ENCODE measurements at regions of chr20 and their contacts with region 1.

Region 1: DNA sequence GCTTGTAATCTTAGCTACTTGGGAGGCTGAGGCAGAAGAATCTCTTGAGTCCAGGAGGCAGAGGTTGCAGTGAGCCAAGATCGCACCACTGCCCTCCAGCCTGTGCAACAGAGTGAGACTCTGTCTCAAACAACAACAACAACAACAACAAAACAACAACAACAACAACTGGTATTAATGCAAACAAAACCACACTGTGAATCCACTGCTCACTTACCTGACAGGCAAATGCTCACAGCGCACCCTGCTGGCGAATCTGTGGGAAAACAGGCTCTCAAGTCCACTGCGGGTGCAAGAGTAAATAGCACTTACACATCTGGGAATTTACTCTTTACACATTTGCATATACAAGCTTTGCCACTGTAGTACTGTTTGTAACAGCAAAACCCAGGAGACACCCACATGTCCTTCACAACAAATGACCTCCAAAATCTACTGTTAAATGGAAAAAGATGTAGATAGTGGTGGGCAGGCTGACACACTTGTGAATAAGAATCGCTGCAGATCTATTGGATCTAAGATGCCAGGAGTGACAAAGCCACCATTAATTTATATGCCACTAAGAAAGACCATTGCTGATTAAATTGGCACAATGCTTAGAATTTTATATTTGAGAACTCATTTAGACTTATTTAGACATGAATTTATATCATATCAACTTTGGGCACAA is 29.3 kb downstream of the NSFL1C start:
- DNase-seq: peak; percentile 57
- H3K4me3 ChIP-seq: no peak overlapping the region
- H3K27ac ChIP-seq: no peak overlapping the region
- H3K4me1 ChIP-seq: peaks cover 13% of the 10 kb centered on the region
- H3K27me3 ChIP-seq: no peaks in the 10 kb centered on the region
- CTCF ChIP-seq: peak; percentile 85 to 93

Region 2: DNA sequence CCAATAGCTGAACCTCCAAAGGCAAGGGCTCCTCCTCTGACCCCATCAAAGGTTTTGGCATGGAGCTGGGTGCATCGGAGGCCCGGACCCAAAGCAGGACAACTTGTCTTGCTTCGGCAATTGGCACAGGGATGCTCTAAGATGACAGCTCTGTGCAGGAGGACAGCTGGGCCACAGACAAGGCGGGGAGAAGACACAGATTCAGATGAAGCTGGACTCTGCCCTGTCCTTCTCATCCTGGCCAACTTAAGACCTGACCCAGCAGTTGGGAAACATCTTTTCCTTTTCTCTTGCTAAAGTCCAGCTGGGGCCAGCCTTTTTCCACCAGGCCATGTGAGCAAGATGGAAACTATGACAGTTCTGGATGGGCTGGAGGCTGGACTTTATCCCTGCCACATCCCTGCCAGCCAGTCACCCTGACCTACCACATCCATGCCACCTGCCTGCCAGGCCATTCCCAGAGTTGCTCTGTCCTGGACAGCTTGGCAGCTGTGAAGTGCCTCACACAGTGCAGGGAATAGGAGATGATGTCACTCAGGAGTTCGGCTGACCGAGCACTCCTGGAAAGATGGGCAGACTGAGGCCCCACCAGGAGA is 331.7 kb before region 1 on chr20:
- CTCF ChIA-PET with region 1: no interaction called
- dilution Hi-C with region 1: no loop called
- in situ Hi-C with region 1: no loop called
- intact Hi-C with region 1: no loop called
- DNase-seq: no peak
- H3K4me3 ChIP-seq: no peak overlapping the region
- H3K27ac ChIP-seq: no peak overlapping the region
- H3K4me1 ChIP-seq: no peaks in the 10 kb centered on the region
- H3K27me3 ChIP-seq: no peaks in the 10 kb centered on the region
- CTCF ChIP-seq: no peak

Region 3: DNA sequence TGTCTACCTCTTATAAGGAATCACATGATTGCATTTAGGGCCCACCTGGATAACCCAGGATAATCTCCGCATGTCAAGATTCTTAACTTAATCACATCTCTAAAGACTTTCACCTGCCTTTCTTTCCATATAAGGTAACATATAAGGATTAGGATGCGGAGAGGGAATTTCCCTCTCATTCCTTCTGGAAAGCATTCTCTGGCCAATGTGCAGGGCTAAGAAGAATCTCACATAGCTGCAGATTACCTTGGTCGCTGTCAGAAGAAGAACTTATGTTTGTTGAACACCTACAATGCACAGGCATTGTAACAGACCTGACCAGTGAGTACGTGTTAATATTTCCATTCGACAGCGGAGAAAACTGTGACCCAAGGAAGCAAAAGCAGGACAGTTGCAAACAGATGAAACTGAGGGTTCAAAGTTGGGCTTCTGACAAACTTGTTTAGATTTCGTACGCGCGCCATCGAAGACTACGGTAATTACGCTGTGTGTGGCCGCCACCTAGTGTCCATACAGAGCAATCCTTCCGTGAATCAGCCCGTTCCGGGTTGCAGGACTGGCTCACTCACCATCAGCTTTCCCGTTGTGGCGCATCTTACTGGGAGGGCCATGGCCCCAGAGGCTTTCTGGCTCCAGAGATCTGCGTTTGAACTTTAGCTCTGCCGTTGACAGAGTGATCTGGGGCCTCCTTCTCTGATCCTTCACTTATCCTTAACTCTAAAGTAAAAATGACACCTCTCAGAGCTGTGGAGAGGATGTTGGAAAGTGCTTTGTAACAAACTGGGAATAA is 224.6 kb before region 1 on chr20:
- CTCF ChIA-PET with region 1: no interaction called
- dilution Hi-C with region 1: no loop called
- in situ Hi-C with region 1: no loop called
- intact Hi-C with region 1: loop called (anchors 5 kb)
- DNase-seq: peak; percentile 65
- H3K4me3 ChIP-seq: no peak overlapping the region
- H3K27ac ChIP-seq: no peak overlapping the region
- H3K4me1 ChIP-seq: no peaks in the 10 kb centered on the region
- H3K27me3 ChIP-seq: peaks cover 1% of the 10 kb centered on the region
- CTCF ChIP-seq: peak; percentile 86

Region 4: GRCh38 chr20:1313236-1313964 is 124.0 kb before region 1 on chr20:
- CTCF ChIA-PET with region 1: no interaction called
- dilution Hi-C with region 1: loop called (anchors 5 kb)
- in situ Hi-C with region 1: loop called in 1 of 2 experiments (anchors 5 kb)
- intact Hi-C with region 1: loop called (anchors 1 kb)
- DNase-seq: peak; percentile 37
- H3K4me3 ChIP-seq: peak overlapping the region in 2 of 3 experiments; percentile 17 to 27
- H3K27ac ChIP-seq: no peak overlapping the region
- H3K4me1 ChIP-seq: peaks cover 2% of the 10 kb centered on the region
- H3K27me3 ChIP-seq: no peaks in the 10 kb centered on the region
- CTCF ChIP-seq: peak; percentile 83 to 95

Region 5: DNA sequence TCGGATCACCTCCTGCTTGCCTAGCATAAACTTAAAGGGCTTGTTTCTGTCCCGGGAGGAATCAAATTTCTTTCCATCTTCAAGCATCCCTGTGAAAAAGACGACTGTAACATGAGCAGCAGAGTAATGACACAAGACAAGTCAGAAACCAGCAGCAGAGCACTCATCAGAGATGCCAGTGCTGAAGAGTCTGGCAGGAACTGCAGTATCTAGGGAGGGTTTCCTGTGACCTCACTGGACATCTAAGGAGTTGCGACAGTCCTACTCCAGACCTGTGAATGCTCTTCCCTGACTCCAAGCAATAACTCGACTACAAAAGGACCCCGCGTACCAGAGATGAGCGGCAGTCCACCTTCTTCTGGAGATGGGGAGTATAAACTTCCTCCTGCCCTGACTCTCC is 61.9 kb before region 1 on chr20:
- CTCF ChIA-PET with region 1: no interaction called
- dilution Hi-C with region 1: no loop called
- in situ Hi-C with region 1: no loop called
- intact Hi-C with region 1: loop called (anchors 5 kb)
- DNase-seq: peak; percentile 37
- H3K4me3 ChIP-seq: no peak overlapping the region
- H3K27ac ChIP-seq: no peak overlapping the region
- H3K4me1 ChIP-seq: peaks cover 71% of the 10 kb centered on the region
- H3K27me3 ChIP-seq: no peaks in the 10 kb centered on the region
- CTCF ChIP-seq: no peak

Region 6: DNA sequence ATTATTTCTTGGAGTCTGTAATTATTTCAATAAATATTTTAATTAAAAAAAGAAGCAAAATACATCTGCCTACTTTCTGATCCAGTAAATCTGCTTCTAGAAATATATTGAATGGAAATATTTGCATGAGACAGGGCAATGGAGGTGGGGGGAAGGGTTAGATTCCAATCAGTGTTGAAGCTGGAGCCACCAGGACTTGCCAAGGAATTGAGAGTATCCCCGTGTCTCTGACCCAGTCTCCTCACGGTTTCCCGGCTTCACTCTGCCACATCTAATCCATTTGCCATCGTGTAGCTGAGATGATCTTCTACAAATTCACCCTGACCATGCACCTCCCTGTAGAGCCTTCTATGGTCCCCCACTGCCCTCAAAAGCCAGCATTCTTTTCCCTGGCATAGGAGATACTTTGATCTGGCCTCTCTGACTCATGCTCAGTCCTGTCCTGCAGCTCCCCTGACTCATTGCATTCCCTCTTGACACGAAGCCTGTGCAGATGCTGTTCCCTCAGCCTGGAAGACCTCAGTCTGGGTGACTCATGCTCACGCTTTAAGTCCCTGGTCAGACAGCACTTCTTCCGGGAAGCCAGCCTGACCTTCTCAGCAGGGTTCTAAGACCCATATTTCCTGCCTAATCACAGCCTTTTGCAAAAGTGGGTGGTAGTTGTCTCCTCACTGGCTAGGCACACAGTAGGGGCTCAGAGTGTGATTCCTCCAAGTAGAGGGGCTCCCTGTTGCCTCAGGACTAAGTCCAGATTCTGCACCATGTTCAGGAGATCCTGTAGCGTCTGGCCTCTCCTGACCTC is 21.5 kb before region 1 on chr20:
- CTCF ChIA-PET with region 1: no interaction called
- dilution Hi-C with region 1: no loop called
- in situ Hi-C with region 1: no loop called
- intact Hi-C with region 1: loop called (anchors 1 kb)
- DNase-seq: peak; percentile 98
- H3K4me3 ChIP-seq: no peak overlapping the region
- H3K27ac ChIP-seq: peak overlapping the region; percentile 68
- H3K4me1 ChIP-seq: peaks cover 40% of the 10 kb centered on the region
- H3K27me3 ChIP-seq: no peaks in the 10 kb centered on the region
- CTCF ChIP-seq: no peak

Region 7: GRCh38 chr20:1503564-1504227 is 66.3 kb after region 1 on chr20:
- CTCF ChIA-PET with region 1: interaction called, 7 read pairs
- dilution Hi-C with region 1: no loop called
- in situ Hi-C with region 1: no loop called
- intact Hi-C with region 1: loop called (anchors 1 kb)
- DNase-seq: peak; percentile 94
- H3K4me3 ChIP-seq: no peak overlapping the region
- H3K27ac ChIP-seq: peak overlapping the region; percentile 37
- H3K4me1 ChIP-seq: peaks cover 67% of the 10 kb centered on the region
- H3K27me3 ChIP-seq: no peaks in the 10 kb centered on the region
- CTCF ChIP-seq: peak; percentile 100